Activated CD4-positive, alpha-beta memory T cell treated with anti-CD3 and anti-CD28 coated beads for 36 hours (primary cell): ENCODE measurements at regions of chr1 and their contacts with region 1.

Region 1: DNA sequence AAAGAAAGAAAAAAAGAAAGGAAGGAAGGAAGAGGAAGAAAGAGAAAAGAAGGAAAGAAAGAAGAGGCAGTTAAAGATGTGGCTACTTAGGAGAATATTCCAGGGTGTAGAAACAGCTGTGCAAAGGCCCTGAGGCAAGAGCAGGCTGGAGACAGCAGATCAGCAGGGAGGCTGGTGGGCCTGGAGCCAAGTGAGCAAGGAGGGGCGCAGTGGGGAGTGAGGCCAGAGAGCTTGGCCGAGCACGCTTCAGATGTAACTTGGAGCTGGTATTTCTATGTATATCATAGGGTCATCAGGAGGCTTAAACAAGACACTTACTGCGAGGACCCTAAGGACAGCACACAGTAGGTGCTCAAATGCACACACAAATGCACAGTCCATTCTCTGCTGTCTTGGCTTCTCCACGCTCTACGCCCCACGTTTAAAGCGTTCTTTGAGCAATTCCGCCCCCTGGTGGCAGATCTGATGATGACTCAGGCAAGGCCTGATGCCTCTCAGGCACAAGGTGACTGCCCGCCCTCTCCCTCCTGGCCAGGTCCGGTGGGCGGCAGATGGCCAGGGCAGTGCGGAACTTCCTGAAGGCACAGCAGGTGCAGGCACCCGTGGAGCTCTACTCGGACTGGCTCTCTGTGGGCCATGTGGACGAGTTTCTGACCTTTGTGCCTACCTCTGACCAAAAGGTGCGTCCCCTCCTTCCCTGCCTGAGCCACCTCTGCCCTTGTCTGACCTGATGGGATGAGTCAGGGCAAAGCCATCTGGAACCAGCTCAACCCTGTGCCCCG is 11.9 kb upstream of the PADI3 start:
- DNase-seq: peak; percentile 90
- H3K4me3 Mint-ChIP-seq: no peak overlapping the region
- H3K27ac Mint-ChIP-seq: no peak overlapping the region
- H3K4me1 Mint-ChIP-seq: no peaks in the 10 kb centered on the region
- H3K27me3 Mint-ChIP-seq: no peaks in the 10 kb centered on the region

Region 2: DNA sequence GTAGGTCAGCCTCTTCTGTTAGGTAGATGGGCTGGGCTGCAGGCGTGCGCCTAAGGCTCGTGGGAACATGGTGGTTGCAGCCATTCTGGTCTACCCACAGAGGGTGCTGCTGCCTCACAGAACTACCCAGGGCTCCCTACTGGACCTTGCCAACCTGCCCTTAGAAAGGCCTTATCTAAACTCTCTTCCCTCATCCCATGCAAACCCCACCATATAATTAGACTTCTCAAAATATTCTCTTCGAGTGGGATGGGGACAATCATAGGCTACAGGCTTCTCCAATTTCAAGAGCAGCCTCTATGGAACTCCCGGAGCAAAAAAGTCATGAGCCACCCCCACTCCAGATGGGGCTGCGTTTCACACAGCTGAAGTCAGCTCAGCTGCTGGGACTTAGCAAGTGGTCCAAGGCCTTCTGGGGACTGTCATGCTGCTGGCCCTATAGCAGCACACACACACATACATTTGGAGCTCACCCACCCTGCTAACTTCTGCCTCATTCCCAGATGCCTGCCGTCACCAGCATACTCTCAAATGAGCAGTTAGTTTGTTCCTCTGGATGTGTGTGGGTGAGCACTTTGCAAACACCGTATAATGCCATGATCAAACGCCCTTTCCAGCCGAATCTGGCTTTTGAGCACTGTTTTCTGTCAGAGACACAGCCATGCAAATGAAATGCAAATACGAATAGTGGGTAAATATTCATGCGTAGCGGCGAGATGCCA is 177.1 kb before region 1 on chr1:
- CTCF ChIA-PET with region 1: interaction called, 3 read pairs
- POLR2A ChIA-PET with region 1: no interaction called
- intact Hi-C with region 1: loop called (anchors 1 kb)
- DNase-seq: peak; percentile 57
- H3K4me3 Mint-ChIP-seq: no peak overlapping the region
- H3K27ac Mint-ChIP-seq: no peak overlapping the region
- H3K4me1 Mint-ChIP-seq: no peaks in the 10 kb centered on the region
- H3K27me3 Mint-ChIP-seq: no peaks in the 10 kb centered on the region

Region 3: GRCh38 chr1:17125756-17126237 is 111.2 kb before region 1 on chr1:
- CTCF ChIA-PET with region 1: interaction called, 196 read pairs
- POLR2A ChIA-PET with region 1: no interaction called
- intact Hi-C with region 1: loop called (anchors 1 kb)
- DNase-seq: peak; percentile 86
- H3K4me3 Mint-ChIP-seq: no peak overlapping the region
- H3K27ac Mint-ChIP-seq: no peak overlapping the region
- H3K4me1 Mint-ChIP-seq: no peaks in the 10 kb centered on the region
- H3K27me3 Mint-ChIP-seq: peaks cover 10% of the 10 kb centered on the region

Region 4: DNA sequence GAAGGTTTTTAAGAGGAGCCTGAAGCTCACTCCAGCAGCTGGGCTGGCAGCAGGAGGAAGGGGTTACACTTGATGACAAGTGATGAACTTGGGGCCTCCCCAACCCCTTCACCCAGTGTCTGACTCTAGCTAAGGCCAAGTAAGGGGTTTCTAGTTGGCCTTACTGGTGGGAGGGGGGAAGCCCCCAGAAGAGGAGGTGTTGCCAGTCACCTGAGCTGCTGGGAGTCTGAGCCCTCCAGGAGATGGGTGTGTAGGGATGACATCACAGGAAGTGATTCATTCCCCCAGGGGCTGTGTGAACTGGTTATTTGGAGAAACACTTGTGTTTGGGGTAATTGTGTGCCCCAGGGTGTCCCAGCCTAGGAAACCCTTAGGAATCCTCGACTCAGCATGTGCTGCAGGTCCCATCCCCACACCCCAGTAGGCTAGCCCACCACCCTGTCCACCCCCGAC is 29.0 kb before region 1 on chr1:
- CTCF ChIA-PET with region 1: interaction called, 10 read pairs
- POLR2A ChIA-PET with region 1: no interaction called
- intact Hi-C with region 1: no loop called
- DNase-seq: peak; percentile 80
- H3K4me3 Mint-ChIP-seq: no peak overlapping the region
- H3K27ac Mint-ChIP-seq: no peak overlapping the region
- H3K4me1 Mint-ChIP-seq: peaks cover 25% of the 10 kb centered on the region
- H3K27me3 Mint-ChIP-seq: peaks cover 24% of the 10 kb centered on the region